ENCODE measurements at regions of chr11 and their contacts with region 1.

Region 1: GRCh38 chr11:72024069-72024754 is 25.5 kb downstream of the IL18BP start:
- DNase-seq: no peak
- ATAC-seq: no peak
- H3K4me3 ChIP-seq: no peak overlapping the region
- H3K4me1 ChIP-seq: peaks cover 8% of the 10 kb centered on the region
- CTCF ChIP-seq: no peak

Region 2: DNA sequence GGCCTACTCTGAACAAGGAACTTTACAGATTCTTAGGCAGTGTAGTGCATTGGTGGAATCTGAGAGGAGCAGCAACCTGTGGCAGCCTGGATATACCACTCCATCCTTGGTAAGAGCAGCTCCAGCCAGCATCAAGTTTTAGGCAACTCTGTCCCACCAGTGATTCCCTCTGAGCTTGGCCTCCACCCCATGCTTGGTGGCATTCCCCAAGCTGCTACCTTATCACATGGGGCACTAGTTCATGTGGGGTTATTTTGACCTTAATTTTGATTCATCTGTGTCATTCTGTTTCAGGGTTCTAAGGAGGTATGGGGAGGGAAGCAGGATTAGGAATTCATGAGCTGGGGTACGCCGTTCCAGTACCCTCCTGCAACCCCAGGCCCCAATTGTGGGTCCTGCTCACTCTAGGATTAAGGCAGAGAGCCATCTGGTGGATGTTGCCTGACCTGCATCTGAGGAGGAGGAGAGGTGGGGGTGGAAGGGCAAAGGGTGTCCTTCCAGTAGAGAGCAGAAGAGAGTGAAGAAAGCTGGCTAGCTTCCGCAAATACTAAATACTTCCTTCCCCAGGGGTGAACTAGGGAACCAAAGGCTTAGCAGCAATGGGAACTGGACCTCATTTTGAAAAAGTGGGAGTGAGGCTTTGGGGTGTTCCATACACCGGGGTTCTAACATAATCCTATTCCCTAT is 66.9 kb after region 1 on chr11:
- intact Hi-C with region 1: loop called (anchors 2 to 5 kb)
- DNase-seq: peak; percentile 55 to 90 (median 84)
- ATAC-seq: peak; percentile 98
- H3K4me3 ChIP-seq: no peak overlapping the region
- H3K4me1 ChIP-seq: no peaks in the 10 kb centered on the region
- CTCF ChIP-seq: peak; percentile 60

Measured in mucosa of descending colon (tissue), 3 donors.